Panc1 (cell line): ENCODE measurements at regions of chr21 and their contacts with region 1.

Region 1: GRCh38 chr21:28943631-28944030 is 49.0 kb downstream of the LTN1 start:
- DNase-seq: no peak
- ATAC-seq: no peak
- H3K4me3 ChIP-seq: no peak overlapping the region
- H3K27ac ChIP-seq: peak overlapping the region; percentile 17; the same call in 1 of the 2 replicates
- H3K4me1 ChIP-seq: peaks cover 6% of the 10 kb centered on the region; the same call in 1 of the 2 replicates
- H3K27me3 ChIP-seq: no peaks in the 10 kb centered on the region
- CTCF ChIP-seq: no peak

Region 2: GRCh38 chr21:28516991-28517592 is 426.5 kb before region 1 on chr21:
- CTCF ChIA-PET with region 1: no interaction called
- POLR2A ChIA-PET with region 1: no interaction called
- in situ Hi-C with region 1: no loop called
- intact Hi-C with region 1: loop called (anchors 5 kb)
- DNase-seq: peak; percentile 15
- ATAC-seq: peak; percentile 87
- H3K4me3 ChIP-seq: no peak overlapping the region
- H3K27ac ChIP-seq: no peak overlapping the region
- H3K4me1 ChIP-seq: no peaks in the 10 kb centered on the region
- H3K27me3 ChIP-seq: no peaks in the 10 kb centered on the region
- CTCF ChIP-seq: peak; percentile 75

Region 3: DNA sequence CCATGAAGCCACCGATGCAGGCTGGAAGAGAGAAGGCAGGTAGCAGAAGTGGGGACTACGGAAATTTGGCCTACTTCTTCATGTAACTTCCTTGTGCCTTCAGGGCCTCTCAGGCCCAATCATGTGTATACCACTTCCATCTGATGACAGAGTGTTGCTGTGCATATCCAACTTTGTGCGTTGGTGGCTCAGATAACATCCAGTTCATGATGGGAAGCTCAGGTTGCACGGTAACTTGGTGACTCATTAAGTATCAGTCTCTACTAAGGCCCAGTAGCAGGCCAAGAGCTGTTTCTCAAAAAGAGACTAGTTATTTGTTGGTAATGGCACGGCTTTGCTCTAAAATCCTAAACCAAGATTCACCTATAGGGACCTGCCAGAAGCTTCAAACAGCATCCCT is 68.6 kb before region 1 on chr21:
- CTCF ChIA-PET with region 1: no interaction called
- POLR2A ChIA-PET with region 1: no interaction called
- in situ Hi-C with region 1: no loop called
- intact Hi-C with region 1: no loop called
- DNase-seq: no peak
- ATAC-seq: no peak
- H3K4me3 ChIP-seq: no peak overlapping the region
- H3K27ac ChIP-seq: no peak overlapping the region; the same call in 1 of the 2 replicates
- H3K4me1 ChIP-seq: no peaks in the 10 kb centered on the region
- H3K27me3 ChIP-seq: no peaks in the 10 kb centered on the region
- CTCF ChIP-seq: no peak

Region 4: GRCh38 chr21:28959367-28960099 is 15.9 kb after region 1 on chr21:
- CTCF ChIA-PET with region 1: no interaction called
- POLR2A ChIA-PET with region 1: interaction called, 18 read pairs
- in situ Hi-C with region 1: no loop called
- intact Hi-C with region 1: no loop called
- DNase-seq: no peak
- ATAC-seq: no peak
- H3K4me3 ChIP-seq: no peak overlapping the region
- H3K27ac ChIP-seq: no peak overlapping the region
- H3K4me1 ChIP-seq: no peaks in the 10 kb centered on the region
- H3K27me3 ChIP-seq: no peaks in the 10 kb centered on the region
- CTCF ChIP-seq: no peak